H1 (cell line): ENCODE measurements at regions of chr11 and their contacts with region 1.

Region 1: DNA sequence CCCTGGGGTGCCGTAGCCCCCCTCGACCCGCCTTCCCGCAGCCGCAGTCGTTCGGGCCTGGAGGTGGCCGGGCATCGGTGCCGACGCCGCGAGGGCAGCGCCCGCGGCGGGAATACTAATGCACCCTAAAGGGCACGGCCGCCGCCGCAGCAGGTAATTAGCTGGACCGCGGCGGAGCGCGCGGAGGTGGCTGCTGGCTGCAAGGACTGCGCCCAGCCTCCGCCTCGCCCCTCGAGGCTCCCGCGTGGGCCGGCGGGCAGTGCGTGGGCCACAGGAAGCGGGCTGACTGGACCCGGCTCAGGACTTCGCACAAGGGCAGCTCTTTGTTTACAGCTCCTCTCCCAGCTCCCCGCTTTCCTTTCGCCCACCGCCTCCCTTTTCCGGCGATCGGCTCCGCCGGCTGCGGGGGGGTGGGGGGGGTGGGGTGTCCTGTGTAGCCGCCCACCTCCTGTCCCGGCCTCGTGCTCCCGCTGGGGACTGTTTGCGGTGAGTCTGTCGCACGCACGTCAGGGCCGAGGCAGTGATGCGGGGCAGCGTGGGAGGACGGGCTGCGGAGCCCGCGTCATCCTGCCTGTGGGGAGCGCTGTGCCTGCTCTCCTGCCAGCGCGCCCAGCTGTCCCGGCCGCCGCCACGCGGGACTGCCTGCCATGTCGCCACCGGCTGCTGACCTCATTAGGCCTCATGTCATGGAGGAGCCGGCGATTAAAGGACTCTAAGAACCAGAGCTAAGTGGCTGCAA is 53.2 kb downstream of the GRIK4 start:
- DNase-seq: no peak
- H3K4me3 ChIP-seq: peak overlapping the region; percentile 48 to 66 (median 58)
- H3K27ac ChIP-seq: no peak overlapping the region
- H3K4me1 ChIP-seq: peaks cover 10 to 28% (median 13%) of the 10 kb centered on the region in 4 experiments
- H3K27me3 ChIP-seq: peaks cover 0 to 38% (median 27%) of the 10 kb centered on the region in 4 experiments; a peak in 6 of 7 replicates
- CTCF ChIP-seq: peak in 2 of 3 experiments; percentile 18 to 42; a peak in 1 of 4 replicates
- EP300 ChIP-seq: no peak
- POLR2A ChIP-seq: peak in 1 of 2 experiments; percentile 33; a peak in 1 of 3 replicates
- RAD21 ChIP-seq: peak in 1 of 2 experiments; percentile 27; a peak in 3 of 4 replicates

Region 2: DNA sequence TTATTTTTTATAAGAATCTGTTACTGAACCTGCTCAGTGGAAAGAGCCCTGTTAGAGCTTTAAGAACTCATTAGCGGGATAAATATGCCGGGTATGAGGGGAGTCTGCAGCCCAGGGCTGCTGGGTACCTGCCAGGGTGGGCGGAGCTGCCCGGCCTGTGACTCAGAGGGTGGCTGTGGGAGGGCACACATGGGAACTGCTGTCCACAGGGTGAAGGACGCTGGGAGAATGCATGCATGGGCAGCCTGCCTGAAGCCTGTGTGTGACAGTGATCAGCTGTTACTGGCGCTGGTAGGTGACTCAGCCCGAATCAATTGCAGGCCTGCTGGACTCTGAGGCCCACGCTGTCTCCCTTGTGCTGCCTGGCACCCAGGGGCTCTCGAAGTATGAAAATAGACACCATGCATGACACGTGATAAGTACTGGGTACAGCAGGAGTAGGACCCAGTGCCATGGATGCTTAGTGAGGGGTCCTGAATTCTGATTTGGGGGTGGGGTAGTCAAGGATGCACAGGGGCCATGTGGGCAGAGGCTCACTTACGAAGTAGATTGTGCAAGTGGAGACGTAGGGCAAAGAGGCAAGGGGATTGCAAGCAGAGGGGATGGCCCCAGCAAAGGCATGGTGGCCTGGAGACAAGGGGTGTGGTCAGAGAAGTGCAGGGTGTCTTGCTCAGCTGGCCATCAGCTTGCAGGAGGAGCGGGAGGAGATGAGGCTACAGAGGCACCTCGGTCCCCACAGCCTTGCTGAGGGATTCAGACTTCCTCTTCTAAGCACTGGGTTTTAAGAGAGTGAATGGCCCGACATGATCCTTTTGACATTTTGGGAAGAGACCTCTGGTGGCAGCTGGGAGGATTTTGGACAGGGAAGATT is 16.7 kb before region 1 on chr11:
- CTCF ChIA-PET with region 1: interaction called, 12 read pairs
- POLR2A ChIA-PET with region 1: interaction called, 4 read pairs
- DNase-seq: no peak
- H3K4me3 ChIP-seq: no peak overlapping the region
- H3K27ac ChIP-seq: no peak overlapping the region
- H3K4me1 ChIP-seq: peaks cover 4 to 23% (median 12%) of the 10 kb centered on the region in 4 experiments
- H3K27me3 ChIP-seq: no peaks in the 10 kb centered on the region; a peak in 1 of 7 replicates
- CTCF ChIP-seq: peak in 2 of 3 experiments; percentile 21 to 43; a peak in 3 of 4 replicates
- EP300 ChIP-seq: no peak
- POLR2A ChIP-seq: no peak
- RAD21 ChIP-seq: peak in 1 of 2 experiments; percentile 42; a peak in 1 of 4 replicates

Region 3: GRCh38 chr11:120682866-120683265 is 118.1 kb after region 1 on chr11:
- CTCF ChIA-PET with region 1: interaction called, 14 read pairs
- POLR2A ChIA-PET with region 1: interaction called, 3 read pairs
- DNase-seq: no peak
- H3K4me3 ChIP-seq: no peak overlapping the region
- H3K27ac ChIP-seq: no peak overlapping the region
- H3K4me1 ChIP-seq: peaks cover 0 to 10% (median 5%) of the 10 kb centered on the region in 4 experiments; a peak in 5 of 7 replicates
- H3K27me3 ChIP-seq: no peaks in the 10 kb centered on the region
- CTCF ChIP-seq: no peak
- EP300 ChIP-seq: no peak
- POLR2A ChIP-seq: no peak
- RAD21 ChIP-seq: no peak